HEK293 (cell line): ENCODE measurements at regions of chr1 and their contacts with region 1.

Region 1: DNA sequence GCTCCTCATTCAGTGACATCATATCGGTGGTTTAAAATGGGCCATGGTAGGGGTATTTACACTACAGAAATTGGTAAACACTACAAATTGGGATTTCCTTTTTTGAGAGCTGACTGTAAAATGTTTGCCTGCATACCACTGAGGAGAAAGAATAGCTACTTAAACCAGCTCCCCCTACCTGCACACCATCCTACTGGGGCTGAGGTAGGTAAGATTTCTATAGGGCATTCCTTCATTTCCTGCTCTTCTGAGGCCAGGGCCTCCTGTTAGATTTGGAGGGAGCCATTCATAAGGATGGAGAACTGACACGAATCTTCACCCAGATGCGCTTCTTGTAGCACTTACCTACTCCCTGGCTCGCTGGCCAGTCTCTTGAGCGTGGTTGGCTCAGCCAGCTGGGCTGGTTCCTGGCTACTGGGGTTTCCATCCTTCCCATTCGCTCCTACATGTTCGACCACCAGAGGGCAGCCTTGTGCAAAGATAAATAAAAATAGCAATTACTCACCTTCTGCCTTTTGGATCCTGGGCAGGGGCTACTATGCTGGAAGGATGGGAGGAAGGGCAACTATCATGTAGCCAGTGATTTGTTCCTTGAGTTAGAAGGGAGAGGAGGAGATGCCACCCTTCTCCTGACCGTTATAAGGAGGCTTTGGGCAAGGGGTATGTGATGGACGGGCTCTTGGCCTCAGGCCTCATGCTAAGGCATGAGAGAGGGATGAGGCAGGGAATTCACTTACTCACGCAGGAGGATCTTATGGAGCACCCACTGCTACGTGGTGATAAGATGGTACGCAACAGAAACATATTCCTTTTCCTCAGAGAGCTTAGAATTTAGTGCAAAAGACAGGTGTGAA is 10.7 kb downstream of the OPTC start:
- H3K4me3 ChIP-seq: no peak overlapping the region
- H3K27ac ChIP-seq: no peak overlapping the region
- H3K4me1 ChIP-seq: no peaks in the 10 kb centered on the region
- CTCF ChIP-seq: peak; percentile 84

Region 2: GRCh38 chr1:203520315-203520714 is 15.7 kb after region 1 on chr1:
- CTCF ChIA-PET with region 1: interaction called, 21 read pairs
- POLR2A ChIA-PET with region 1: no interaction called
- H3K4me3 ChIP-seq: no peak overlapping the region
- H3K27ac ChIP-seq: no peak overlapping the region
- H3K4me1 ChIP-seq: no peaks in the 10 kb centered on the region; the same call in 1 of the 2 replicates
- CTCF ChIP-seq: no peak

Region 3: GRCh38 chr1:203625628-203626019 is 121.0 kb after region 1 on chr1:
- CTCF ChIA-PET with region 1: interaction called, 10 read pairs
- POLR2A ChIA-PET with region 1: interaction called, 4 read pairs
- H3K4me3 ChIP-seq: no peak overlapping the region
- H3K27ac ChIP-seq: no peak overlapping the region; the same call in 1 of the 2 replicates
- H3K4me1 ChIP-seq: peaks cover 6% of the 10 kb centered on the region; the same call in 1 of the 2 replicates
- CTCF ChIP-seq: peak; percentile 87

Region 4: DNA sequence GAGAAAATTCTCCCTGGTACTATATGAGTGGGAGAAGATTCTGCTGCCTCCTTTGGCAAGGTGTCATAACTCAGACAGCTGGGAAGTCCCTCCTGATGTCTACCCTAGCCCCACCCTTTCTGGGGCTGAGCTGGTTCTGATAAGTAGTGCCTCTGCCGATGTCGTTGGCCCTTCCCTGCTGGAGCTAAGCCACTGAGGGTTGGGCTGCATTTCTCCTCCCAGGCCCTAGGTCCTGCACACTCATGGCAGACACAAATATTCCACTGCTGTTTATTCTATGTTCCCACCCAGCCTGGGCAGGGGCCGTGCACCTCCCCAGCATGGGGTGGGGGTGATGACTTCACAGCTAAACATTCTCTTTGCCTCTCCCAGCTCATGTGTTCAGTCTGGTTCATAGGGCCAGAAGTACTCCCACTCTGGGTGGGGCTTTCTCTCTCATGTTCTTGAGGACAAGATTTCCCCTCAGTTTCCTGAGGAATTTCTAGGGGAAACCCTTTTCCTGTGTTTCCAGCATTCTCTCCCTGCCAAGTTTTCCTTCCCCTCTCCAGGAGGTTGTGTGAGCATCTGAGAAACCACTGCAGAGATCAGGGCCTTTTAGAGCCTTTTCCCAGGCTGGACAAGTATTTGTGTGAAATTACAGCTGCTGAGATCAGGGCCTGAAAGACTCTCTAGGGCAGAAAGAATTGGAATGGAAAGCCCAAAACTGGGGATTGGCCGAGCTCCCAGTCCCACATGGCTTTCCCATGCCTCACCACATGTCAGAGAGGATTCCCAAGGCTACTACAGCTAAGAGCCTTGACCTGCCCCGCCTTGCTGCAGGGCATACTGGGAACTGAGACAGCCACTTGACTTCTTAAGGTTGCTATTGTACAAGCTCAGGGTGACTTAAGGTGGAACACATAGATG is 188.2 kb after region 1 on chr1:
- CTCF ChIA-PET with region 1: interaction called, 23 read pairs
- POLR2A ChIA-PET with region 1: interaction called, 3 read pairs
- H3K4me3 ChIP-seq: no peak overlapping the region
- H3K27ac ChIP-seq: no peak overlapping the region
- H3K4me1 ChIP-seq: no peaks in the 10 kb centered on the region
- CTCF ChIP-seq: no peak

Region 5: GRCh38 chr1:203733009-203733863 is 228.6 kb after region 1 on chr1:
- CTCF ChIA-PET with region 1: no interaction called
- POLR2A ChIA-PET with region 1: no interaction called
- H3K4me3 ChIP-seq: no peak overlapping the region
- H3K27ac ChIP-seq: no peak overlapping the region
- H3K4me1 ChIP-seq: no peaks in the 10 kb centered on the region
- CTCF ChIP-seq: no peak